ENCODE measurements at regions of chr1 and their contacts with region 1.

Region 1: GRCh38 chr1:21779613-21780521 is 3.1 kb downstream of the USP48 start:
- DNase-seq: peak; percentile 25

Region 2: DNA sequence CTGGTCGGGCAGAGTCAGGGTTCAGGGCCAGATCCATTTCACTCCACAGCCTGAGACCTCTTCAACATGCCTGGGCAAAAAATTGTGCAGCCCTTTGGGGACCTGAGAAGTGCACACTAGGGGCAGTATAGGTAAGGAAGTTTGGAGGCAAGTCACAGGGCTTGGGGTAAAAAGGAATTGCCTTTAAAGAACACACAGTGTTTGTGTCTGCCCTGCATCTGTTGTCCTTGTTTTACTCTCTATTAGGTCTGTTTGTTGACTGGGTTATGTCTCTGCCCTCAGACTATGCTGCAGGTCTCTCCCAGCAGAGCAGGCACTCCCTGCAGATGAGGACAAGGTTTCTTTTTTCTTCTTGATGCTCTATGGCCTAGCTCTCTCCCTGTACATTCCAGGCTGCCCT is 54.2 kb after region 1 on chr1:
- intact Hi-C with region 1: no loop called
- DNase-seq: no peak

Region 3: DNA sequence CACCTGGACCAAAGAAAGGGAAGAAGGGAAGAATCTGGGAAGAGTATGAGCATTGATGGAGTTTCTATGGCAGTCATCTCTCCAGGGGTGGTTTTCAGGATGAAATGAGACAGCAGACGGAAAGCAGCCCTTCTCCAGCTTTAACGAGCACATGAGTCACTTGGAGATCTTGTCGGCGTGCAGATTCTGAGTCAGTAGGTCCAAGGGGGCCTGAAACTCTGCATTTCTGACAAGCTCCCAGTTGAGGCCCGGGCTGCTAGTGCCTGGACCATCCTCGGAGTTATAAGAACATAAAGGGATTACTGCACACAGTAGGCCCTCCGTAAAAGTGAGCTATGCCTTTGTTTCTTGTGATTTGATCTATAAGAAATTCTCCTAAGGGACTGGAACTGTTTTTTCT is 139.7 kb after region 1 on chr1:
- intact Hi-C with region 1: no loop called
- DNase-seq: no peak

Region 4: DNA sequence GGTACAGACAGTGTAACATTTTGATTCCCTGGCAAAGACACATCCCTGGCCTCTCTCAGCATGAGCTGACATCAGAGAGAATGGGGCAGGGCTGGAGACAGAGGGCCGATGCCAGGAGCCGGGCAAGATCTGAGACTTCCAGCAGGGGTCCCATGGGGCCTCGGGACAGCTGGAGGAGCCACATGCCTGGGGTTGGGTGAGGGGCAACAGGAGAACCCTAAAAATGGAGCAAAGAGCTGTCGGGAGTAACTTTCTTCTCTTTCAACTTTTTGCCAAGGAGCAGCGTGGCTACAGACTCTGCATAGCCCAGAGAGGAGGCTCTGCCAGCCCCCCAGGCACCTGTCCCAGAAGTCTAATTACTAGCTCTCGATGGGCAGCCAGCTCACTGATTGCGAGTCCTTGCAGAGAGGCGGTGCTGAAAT is 1062.0 kb after region 1 on chr1:
- intact Hi-C with region 1: loop called in 1 of 2 experiments (anchors 5 kb)
- DNase-seq: peak; percentile 89